ENCODE measurements at regions of chr18 and their contacts with region 1.

Region 1: GRCh38 chr18:12838178-12838634 is 45.8 kb downstream of the PTPN2 start:
- DNase-seq: peak; percentile 32 to 35
- ATAC-seq: peak in 2 of 3 donors; percentile 3 to 14
- H3K4me3 ChIP-seq: peak overlapping the region; percentile 1
- H3K4me3 Mint-ChIP-seq: peak overlapping the region; percentile 92
- H3K27ac ChIP-seq: peak overlapping the region; percentile 73
- H3K27ac Mint-ChIP-seq: peak overlapping the region; percentile 92 to 98
- H3K4me1 ChIP-seq: peaks cover 31% of the 10 kb centered on the region
- H3K4me1 Mint-ChIP-seq: peaks cover 63% of the 10 kb centered on the region in 2 donors
- H3K27me3 ChIP-seq: no peaks in the 10 kb centered on the region
- H3K27me3 Mint-ChIP-seq: no peaks in the 10 kb centered on the region
- CTCF ChIP-seq: no peak

Region 2: DNA sequence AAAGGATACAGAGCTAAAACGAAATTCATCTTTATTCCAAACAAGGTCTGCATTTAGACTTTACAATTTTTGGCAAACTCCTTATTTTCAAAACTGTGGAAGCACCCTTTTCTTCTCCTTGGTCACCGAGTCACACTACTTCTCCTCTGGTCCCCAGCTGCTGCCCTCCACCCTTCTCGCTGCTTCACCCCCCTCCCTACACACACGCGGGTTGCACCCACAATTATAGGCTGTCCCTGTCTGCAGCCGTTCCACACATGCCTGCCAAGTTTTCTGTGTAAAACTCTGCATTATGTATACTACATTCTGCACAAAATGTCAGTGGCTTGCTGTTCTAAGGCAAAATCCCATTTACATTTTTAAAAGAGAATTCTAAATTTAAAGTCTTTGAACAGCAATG is 17.7 kb before region 1 on chr18:
- intact Hi-C with region 1: loop called (anchors 2 kb)
- DNase-seq: no peak
- ATAC-seq: peak in 1 of 3 donors; percentile 49
- H3K4me3 ChIP-seq: no peak overlapping the region
- H3K4me3 Mint-ChIP-seq: peak overlapping the region; percentile 14
- H3K27ac ChIP-seq: no peak overlapping the region
- H3K27ac Mint-ChIP-seq: peak overlapping the region; percentile 80 to 86
- H3K4me1 ChIP-seq: peaks cover 7% of the 10 kb centered on the region
- H3K4me1 Mint-ChIP-seq: peaks cover 36 to 43% of the 10 kb centered on the region in 2 donors
- H3K27me3 ChIP-seq: no peaks in the 10 kb centered on the region
- H3K27me3 Mint-ChIP-seq: no peaks in the 10 kb centered on the region
- CTCF ChIP-seq: no peak

Region 3: GRCh38 chr18:12960853-12961397 is 122.7 kb after region 1 on chr18:
- intact Hi-C with region 1: no loop called
- DNase-seq: no peak
- ATAC-seq: no peak
- H3K4me3 ChIP-seq: no peak overlapping the region
- H3K4me3 Mint-ChIP-seq: no peak overlapping the region
- H3K27ac ChIP-seq: no peak overlapping the region
- H3K27ac Mint-ChIP-seq: no peak overlapping the region
- H3K4me1 ChIP-seq: no peaks in the 10 kb centered on the region
- H3K4me1 Mint-ChIP-seq: no peaks in the 10 kb centered on the region
- H3K27me3 ChIP-seq: no peaks in the 10 kb centered on the region
- H3K27me3 Mint-ChIP-seq: no peaks in the 10 kb centered on the region
- CTCF ChIP-seq: no peak

Measured in natural killer cell (primary cell).